MCF 10A (cell line): ENCODE measurements at regions of chr11 and their contacts with region 1.

Region 1: DNA sequence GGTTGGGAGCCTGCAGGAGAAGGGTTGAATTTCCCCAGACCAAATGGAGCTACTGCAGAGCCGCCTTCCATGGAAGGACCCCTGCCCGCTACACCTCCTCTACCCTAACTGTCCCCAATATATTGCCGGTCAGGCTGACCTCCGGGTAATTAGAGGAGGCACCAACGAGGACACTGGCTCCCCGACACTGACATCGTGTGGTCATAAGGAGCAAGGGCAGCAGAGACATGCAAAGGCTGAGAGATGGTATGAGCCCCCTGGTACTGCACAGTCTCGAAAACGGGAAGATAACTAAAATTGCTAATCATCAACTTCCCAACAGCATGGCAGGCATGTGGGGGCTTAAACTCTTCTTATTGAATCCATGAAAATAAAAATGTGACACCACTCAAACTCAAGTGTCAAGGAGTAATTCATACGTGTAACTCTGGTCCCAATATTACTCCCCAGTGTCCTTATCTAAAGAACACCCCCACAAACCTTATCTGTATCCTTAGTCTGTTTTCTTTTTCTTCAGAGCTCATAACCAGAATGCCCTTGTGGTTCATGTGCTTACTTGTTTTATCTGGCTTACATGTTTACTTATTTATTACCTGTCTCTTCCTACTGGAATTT is 4.4 kb downstream of the CAVIN3 start:
- DNase-seq: peak; percentile 73
- H3K4me3 Mint-ChIP-seq: no peak overlapping the region
- H3K27ac Mint-ChIP-seq: no peak overlapping the region
- H3K4me1 Mint-ChIP-seq: peaks cover 18% of the 10 kb centered on the region
- H3K27me3 Mint-ChIP-seq: no peaks in the 10 kb centered on the region
- CTCF ChIP-seq: peak; percentile 80

Region 2: GRCh38 chr11:6012035-6012668 is 303.8 kb before region 1 on chr11:
- CTCF ChIA-PET with region 1: interaction called, 10 read pairs
- POLR2A ChIA-PET with region 1: no interaction called
- intact Hi-C with region 1: no loop called
- DNase-seq: peak; percentile 5
- H3K4me3 Mint-ChIP-seq: no peak overlapping the region
- H3K27ac Mint-ChIP-seq: no peak overlapping the region
- H3K4me1 Mint-ChIP-seq: no peaks in the 10 kb centered on the region
- H3K27me3 Mint-ChIP-seq: peaks cover 30% of the 10 kb centered on the region
- CTCF ChIP-seq: no peak

Region 3: GRCh38 chr11:6206456-6207180 is 109.3 kb before region 1 on chr11:
- CTCF ChIA-PET with region 1: interaction called, 10 read pairs
- POLR2A ChIA-PET with region 1: no interaction called
- intact Hi-C with region 1: no loop called
- DNase-seq: no peak
- H3K4me3 Mint-ChIP-seq: no peak overlapping the region
- H3K27ac Mint-ChIP-seq: no peak overlapping the region
- H3K4me1 Mint-ChIP-seq: peaks cover 4% of the 10 kb centered on the region
- H3K27me3 Mint-ChIP-seq: no peaks in the 10 kb centered on the region
- CTCF ChIP-seq: no peak

Region 4: GRCh38 chr11:6234387-6235107 is 81.4 kb before region 1 on chr11 and contains the start of gene FHIP1B:
- CTCF ChIA-PET with region 1: interaction called, 12 read pairs
- POLR2A ChIA-PET with region 1: interaction called, 59 read pairs
- intact Hi-C with region 1: loop called (anchors 1 kb)
- DNase-seq: peak; percentile 100
- H3K4me3 Mint-ChIP-seq: peak within 1 kb of the TSS; percentile 94
- H3K27ac Mint-ChIP-seq: peak within 1 kb of the TSS; percentile 93
- H3K4me1 Mint-ChIP-seq: peaks cover 26% of the 10 kb centered on the region
- H3K27me3 Mint-ChIP-seq: no peaks in the 10 kb centered on the region
- CTCF ChIP-seq: no peak
- total RNA-seq, gene FHIP1B: 44.6 and 51.1 TPM in 2 replicates

Region 5: GRCh38 chr11:6345366-6345765 is 29.4 kb after region 1 on chr11:
- CTCF ChIA-PET with region 1: interaction called, 12 read pairs
- POLR2A ChIA-PET with region 1: interaction called, 12 read pairs
- intact Hi-C with region 1: no loop called
- DNase-seq: no peak
- H3K4me3 Mint-ChIP-seq: no peak overlapping the region
- H3K27ac Mint-ChIP-seq: no peak overlapping the region
- H3K4me1 Mint-ChIP-seq: peaks cover 7% of the 10 kb centered on the region
- H3K27me3 Mint-ChIP-seq: no peaks in the 10 kb centered on the region
- CTCF ChIP-seq: no peak

Region 6: DNA sequence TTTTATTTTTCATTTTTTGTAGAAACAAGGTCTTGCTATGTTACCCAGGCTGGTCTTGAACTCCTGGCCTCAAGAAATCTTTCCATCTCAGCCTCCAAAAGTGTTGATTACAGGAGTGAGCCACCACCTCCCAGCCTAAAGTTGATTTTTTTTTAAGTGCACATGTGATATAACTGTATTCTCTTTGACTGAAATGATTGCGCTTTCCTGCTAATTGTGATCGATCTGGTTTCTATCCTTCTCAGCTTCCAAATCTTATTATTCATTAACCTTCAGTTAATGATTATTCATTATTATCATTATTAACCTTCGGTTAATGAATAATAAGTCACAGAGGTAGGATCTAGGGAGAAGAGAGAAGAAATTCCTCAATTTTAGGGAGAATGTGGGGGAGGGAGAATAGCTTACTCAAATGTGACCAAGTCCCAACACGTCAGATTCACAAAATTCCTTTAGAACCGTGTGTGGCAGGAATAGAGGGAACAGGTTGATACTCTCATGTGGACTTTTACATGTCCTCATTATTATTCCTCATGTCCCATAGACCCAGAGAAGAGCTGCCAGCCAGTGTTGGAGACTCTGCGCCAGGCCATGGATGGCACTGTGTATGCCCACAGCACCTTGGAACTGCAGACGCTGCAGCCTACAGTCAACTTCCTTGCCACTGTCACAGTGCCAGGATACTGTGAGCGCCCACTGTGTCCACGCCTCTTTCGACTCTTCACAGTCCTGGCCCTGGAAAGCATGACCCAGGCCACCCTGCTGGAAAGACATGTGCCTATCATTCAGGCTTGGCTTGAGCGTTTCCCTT is 240.4 kb after region 1 on chr11:
- CTCF ChIA-PET with region 1: no interaction called
- POLR2A ChIA-PET with region 1: no interaction called
- intact Hi-C with region 1: no loop called
- DNase-seq: no peak
- H3K4me3 Mint-ChIP-seq: no peak overlapping the region
- H3K27ac Mint-ChIP-seq: no peak overlapping the region
- H3K4me1 Mint-ChIP-seq: no peaks in the 10 kb centered on the region
- H3K27me3 Mint-ChIP-seq: no peaks in the 10 kb centered on the region
- CTCF ChIP-seq: no peak